Activated CD8-positive, alpha-beta memory T cell treated with anti-CD3 and anti-CD28 coated beads, Interleukin-2, amount 10 ng/mL, durations not matched to agents 7 days and 5 days (primary cell): ENCODE measurements at regions of chr11 and their contacts with region 1.

Region 1: GRCh38 chr11:65329944-65330403 is 3.7 kb upstream of the DPF2 start:
- DNase-seq: peak; percentile 89
- ATAC-seq: no peak
- H3K4me3 Mint-ChIP-seq: no peak overlapping the region
- H3K27ac Mint-ChIP-seq: no peak overlapping the region
- H3K4me1 Mint-ChIP-seq: peaks cover 15% of the 10 kb centered on the region
- H3K27me3 Mint-ChIP-seq: peaks cover 6% of the 10 kb centered on the region

Region 2: DNA sequence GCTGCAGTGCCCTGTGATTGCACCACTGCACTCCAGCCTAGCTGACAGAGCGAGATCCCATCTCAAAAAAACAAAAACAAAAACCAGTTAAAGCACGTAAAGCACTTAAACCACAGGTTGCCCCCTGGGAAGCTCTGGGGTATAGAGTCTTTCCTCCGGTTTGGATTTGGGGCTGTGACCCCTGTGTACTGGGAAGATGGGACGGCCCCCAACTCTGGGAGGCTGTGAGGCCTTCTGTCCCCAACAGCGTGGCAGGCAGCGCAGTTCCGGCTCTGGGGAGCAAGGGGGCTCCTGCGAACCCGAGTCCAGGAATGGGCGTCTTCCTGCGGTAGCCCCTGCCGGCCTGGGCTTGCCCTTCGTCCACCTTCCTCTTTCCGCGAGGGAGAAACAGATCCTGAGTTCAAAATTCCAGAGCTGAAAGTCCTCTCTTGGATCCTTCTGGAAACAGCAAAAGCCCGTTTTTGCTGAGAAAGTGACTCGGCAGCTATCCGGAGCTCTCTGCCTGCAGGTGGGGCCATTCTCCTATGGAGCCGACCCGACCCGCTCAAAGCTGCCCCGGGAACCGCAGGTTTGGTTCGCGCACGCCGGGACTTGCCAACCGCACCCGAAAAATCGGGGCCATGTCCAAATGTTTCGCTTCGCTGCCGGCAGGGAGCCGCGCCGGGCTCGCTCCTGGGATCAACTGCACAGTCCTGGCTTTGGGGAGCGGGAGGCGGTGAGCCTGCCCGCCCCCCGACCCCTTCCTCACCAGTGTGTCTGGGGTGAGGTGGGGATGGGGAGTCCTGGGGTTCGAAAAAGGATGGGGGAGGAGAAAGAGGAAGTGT is 104.5 kb before region 1 on chr11:
- CTCF ChIA-PET with region 1: interaction called, 69 read pairs
- DNase-seq: peak; percentile 72
- ATAC-seq: peak; percentile 90
- H3K4me3 Mint-ChIP-seq: peak overlapping the region; percentile 70
- H3K27ac Mint-ChIP-seq: no peak overlapping the region
- H3K4me1 Mint-ChIP-seq: peaks cover 19% of the 10 kb centered on the region
- H3K27me3 Mint-ChIP-seq: peaks cover 17% of the 10 kb centered on the region

Region 3: GRCh38 chr11:65261591-65262380 is 68.2 kb before region 1 on chr11 and contains the start of gene POLA2:
- CTCF ChIA-PET with region 1: interaction called, 16 read pairs
- DNase-seq: peak; percentile 97
- ATAC-seq: peak; percentile 96
- H3K4me3 Mint-ChIP-seq: peak within 1 kb of the TSS; percentile 94
- H3K27ac Mint-ChIP-seq: peak within 1 kb of the TSS; percentile 93
- H3K4me1 Mint-ChIP-seq: peaks cover 49% of the 10 kb centered on the region
- H3K27me3 Mint-ChIP-seq: no peaks in the 10 kb centered on the region
- total RNA-seq, gene POLA2: 79.8 to 89.5 TPM

Region 4: GRCh38 chr11:65340226-65340625 is 10.3 kb after region 1 on chr11:
- CTCF ChIA-PET with region 1: interaction called, 21 read pairs
- DNase-seq: no peak
- ATAC-seq: no peak
- H3K4me3 Mint-ChIP-seq: no peak overlapping the region
- H3K27ac Mint-ChIP-seq: no peak overlapping the region
- H3K4me1 Mint-ChIP-seq: peaks cover 25% of the 10 kb centered on the region
- H3K27me3 Mint-ChIP-seq: no peaks in the 10 kb centered on the region

Region 5: GRCh38 chr11:65382033-65382807 is 52.2 kb after region 1 on chr11 and contains the start of gene SLC25A45:
- CTCF ChIA-PET with region 1: interaction called, 10 read pairs
- DNase-seq: peak; percentile 94
- ATAC-seq: peak; percentile 84
- H3K4me3 Mint-ChIP-seq: peak within 1 kb of the TSS; percentile 80
- H3K27ac Mint-ChIP-seq: peak within 1 kb of the TSS; percentile 98
- H3K4me1 Mint-ChIP-seq: peaks cover 51% of the 10 kb centered on the region
- H3K27me3 Mint-ChIP-seq: no peaks in the 10 kb centered on the region
- total RNA-seq, gene SLC25A45: 19.4 to 25.1 TPM

Region 6: DNA sequence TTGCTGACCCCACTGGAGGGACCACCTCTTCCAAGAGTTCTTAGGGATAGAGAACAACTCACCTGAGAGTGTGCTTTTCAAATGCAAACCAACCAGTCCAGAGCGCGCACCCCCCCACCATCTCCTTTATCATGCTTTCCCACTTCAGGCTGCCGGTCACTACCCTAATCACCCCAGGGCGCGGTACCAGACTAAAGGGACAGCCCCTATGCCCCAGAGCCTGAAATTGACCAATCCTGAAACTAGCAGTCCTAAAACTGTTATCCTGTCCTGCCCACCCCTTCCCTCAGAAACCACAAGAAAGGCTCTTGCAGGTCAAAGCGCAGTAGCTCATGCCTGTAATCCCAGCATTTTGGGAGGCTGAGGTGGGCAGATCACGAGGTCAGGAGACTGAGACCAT is 129.6 kb after region 1 on chr11:
- CTCF ChIA-PET with region 1: no interaction called
- DNase-seq: no peak
- ATAC-seq: no peak
- H3K4me3 Mint-ChIP-seq: no peak overlapping the region
- H3K27ac Mint-ChIP-seq: no peak overlapping the region
- H3K4me1 Mint-ChIP-seq: peaks cover 28% of the 10 kb centered on the region
- H3K27me3 Mint-ChIP-seq: no peaks in the 10 kb centered on the region